Heart right ventricle (tissue), 16 donors: ENCODE measurements at regions of chr3 and their contacts with region 1.

Region 1: DNA sequence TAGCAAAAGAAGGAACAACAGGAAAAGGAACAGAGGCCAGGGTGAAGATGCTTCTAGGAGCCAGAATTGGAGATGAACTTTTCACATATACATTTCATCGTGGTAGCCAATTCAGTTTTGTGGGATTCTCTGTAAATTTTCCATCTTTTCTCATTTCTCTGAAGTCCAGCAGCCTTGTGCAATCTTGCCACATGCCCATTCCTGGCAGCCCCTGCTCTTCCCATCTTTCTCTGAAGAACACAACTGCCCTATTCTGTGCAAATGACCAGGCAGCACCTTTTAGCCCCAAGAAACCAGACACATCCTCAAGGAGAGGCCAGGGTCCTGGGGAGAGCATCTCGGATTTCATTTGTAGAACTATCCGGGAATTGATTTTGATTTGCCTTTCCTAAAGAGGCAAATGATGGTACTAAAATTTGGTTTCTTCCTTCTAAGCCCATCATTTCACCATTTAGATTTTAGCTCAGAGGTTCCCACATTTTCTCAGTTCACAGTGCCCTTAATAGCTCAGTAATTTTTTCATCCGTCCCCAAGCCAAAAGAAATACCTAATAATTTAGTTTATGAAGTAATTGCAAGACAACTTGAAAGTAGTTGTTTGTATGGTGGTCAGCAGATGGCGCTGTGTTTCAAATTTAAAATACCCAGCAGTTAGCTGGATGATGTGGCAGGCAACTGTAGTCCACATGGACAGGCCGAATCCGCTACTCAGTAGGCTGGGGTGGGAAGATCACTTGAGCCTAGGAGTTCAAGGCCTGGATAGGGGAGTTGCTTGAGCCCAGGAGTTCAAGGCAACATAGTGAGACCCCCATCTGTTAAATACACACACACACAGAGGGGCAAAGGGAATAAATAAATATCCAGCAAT is 61.3 kb upstream of the ACKR4 start:
- DNase-seq: peak; percentile 16 to 78
- ATAC-seq: peak; percentile 81 to 90 (median 88)
- H3K4me3 ChIP-seq: no peak overlapping the region
- H3K27ac ChIP-seq: peak overlapping the region in 3 of 10 donors; percentile 17 to 32 (median 20)
- H3K4me1 ChIP-seq: peaks cover 0 to 9% (median 0%) of the 10 kb centered on the region in 9 donors
- H3K27me3 ChIP-seq: no peaks in the 10 kb centered on the region
- CTCF ChIP-seq: peak; percentile 50 to 79 (median 67)

Region 2: DNA sequence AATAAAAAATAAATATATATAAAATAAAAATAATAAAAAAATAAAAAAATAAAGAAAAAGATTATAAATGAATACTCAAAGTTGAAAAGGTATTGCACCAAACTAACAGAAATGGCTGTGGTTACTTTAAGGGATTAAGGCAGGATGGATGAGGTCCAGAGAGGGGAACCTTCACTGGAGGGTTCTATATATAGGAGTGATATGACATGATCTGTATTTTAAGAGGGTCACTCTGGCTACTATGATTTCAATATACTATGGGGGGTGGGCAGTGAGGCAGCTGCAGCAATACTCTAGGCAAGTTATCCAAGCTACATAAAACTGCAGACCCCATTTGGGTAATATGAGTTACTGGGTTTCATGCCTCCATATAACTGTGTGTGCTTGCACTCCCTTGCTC is 99.2 kb after region 1 on chr3:
- intact Hi-C with region 1: loop called in 3 of 10 experiments (anchors 2 to 5 kb)
- DNase-seq: no peak
- ATAC-seq: peak; percentile 63 to 96 (median 84)
- H3K4me3 ChIP-seq: no peak overlapping the region
- H3K27ac ChIP-seq: peak overlapping the region in 2 of 10 donors; percentile 38 to 44
- H3K4me1 ChIP-seq: peaks cover 0 to 8% (median 0%) of the 10 kb centered on the region in 9 donors
- H3K27me3 ChIP-seq: no peaks in the 10 kb centered on the region
- CTCF ChIP-seq: no peak

Region 3: GRCh38 chr3:132641837-132642538 is 106.2 kb after region 1 on chr3:
- intact Hi-C with region 1: loop called (anchors 1 to 5 kb)
- DNase-seq: no peak
- ATAC-seq: peak in 4 of 8 donors; percentile 48 to 72 (median 66)
- H3K4me3 ChIP-seq: no peak overlapping the region
- H3K27ac ChIP-seq: no peak overlapping the region
- H3K4me1 ChIP-seq: peaks cover 0 to 7% (median 0%) of the 10 kb centered on the region in 9 donors
- H3K27me3 ChIP-seq: no peaks in the 10 kb centered on the region
- CTCF ChIP-seq: peak; percentile 69 to 89 (median 84)